ENCODE measurements at regions of chr6 and their contacts with region 1.

Region 1: DNA sequence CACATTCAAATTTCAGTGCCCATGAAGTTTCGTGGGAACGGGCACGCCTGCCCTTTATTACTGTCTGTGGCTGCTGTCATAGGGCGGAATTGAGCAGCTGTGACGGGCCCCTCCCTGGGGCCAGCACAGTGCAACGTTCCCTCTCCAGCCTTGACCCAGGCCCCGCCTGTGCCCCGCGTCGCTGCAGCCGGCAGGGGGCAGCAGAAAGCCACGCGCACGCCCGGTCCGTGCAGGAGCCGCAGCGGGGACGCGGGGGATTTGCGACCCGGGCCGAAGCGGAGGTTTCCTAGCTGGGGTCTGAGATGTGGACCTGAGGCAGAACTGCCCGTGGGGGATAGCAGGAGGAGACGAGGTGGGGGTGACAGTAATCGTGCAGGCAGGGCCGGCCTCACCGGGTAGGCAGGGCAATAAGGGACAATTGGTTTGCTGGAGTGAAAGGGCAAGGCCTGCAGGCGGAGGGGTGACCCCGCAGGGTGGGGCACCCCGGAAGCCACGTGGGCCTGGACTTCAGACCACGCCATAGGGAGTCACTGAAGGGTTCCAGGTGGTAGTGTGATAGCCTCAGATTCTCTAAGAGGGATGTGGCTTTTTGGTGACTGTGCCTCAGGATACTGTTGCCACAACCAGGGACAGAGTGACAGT is 54.4 kb downstream of the SYTL3 start:
- DNase-seq: peak; percentile 81 to 92 (median 86)
- H3K4me3 ChIP-seq: peak overlapping the region in 2 of 3 donors; percentile 65 to 66
- H3K27ac ChIP-seq: no peak overlapping the region
- H3K4me1 ChIP-seq: peaks cover 0 to 27% (median 17%) of the 10 kb centered on the region in 3 donors
- H3K27me3 ChIP-seq: no peaks in the 10 kb centered on the region
- CTCF ChIP-seq: peak; percentile 98

Region 2: GRCh38 chr6:158987657-158988056 is 283.4 kb after region 1 on chr6:
- intact Hi-C with region 1: loop called (anchors 10 kb)
- DNase-seq: no peak
- H3K4me3 ChIP-seq: no peak overlapping the region
- H3K27ac ChIP-seq: no peak overlapping the region
- H3K4me1 ChIP-seq: no peaks in the 10 kb centered on the region
- H3K27me3 ChIP-seq: no peaks in the 10 kb centered on the region
- CTCF ChIP-seq: no peak

Region 3: DNA sequence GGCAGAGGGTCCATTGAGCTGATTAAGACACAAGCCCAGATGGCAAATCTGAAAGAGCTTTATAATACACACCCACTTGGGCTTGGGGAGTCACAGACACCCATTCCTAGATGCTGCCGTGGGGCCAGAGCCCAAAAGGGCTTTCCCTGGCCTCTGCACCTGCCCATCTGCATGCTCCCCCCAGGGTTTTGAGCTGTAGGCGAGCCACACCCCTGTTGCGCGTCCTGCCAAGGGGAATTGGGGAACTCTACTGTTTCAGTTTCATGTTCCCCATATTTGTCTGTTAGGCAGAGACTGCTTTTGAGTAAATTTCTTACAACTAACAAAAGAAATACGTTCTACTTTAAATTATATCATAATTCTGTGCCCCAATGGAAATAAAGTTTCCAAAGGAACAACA is 412.0 kb after region 1 on chr6:
- intact Hi-C with region 1: no loop called
- DNase-seq: no peak
- H3K4me3 ChIP-seq: no peak overlapping the region
- H3K27ac ChIP-seq: no peak overlapping the region
- H3K4me1 ChIP-seq: no peaks in the 10 kb centered on the region
- H3K27me3 ChIP-seq: no peaks in the 10 kb centered on the region
- CTCF ChIP-seq: no peak

Measured in kidney (tissue), 22 donors.